Aorta (tissue), 5 donors: ENCODE measurements at regions of chr19 and their contacts with region 1.

Region 1: GRCh38 chr19:17703824-17704463 is 15.3 kb upstream of the MAP1S start:
- DNase-seq: peak; percentile 69 to 87
- ATAC-seq: peak; percentile 63
- H3K4me3 ChIP-seq: no peak overlapping the region
- H3K27ac ChIP-seq: no peak overlapping the region
- H3K4me1 ChIP-seq: no peaks in the 10 kb centered on the region
- H3K27me3 ChIP-seq: peaks cover 0 to under 1% of the 10 kb centered on the region in 2 donors

Region 2: GRCh38 chr19:17739121-17739875 is 35.4 kb after region 1 on chr19:
- intact Hi-C with region 1: no loop called
- DNase-seq: peak in 1 of 2 donors; percentile 76
- ATAC-seq: no peak
- H3K4me3 ChIP-seq: no peak overlapping the region
- H3K27ac ChIP-seq: no peak overlapping the region
- H3K4me1 ChIP-seq: no peaks in the 10 kb centered on the region
- H3K27me3 ChIP-seq: no peaks in the 10 kb centered on the region

Region 3: DNA sequence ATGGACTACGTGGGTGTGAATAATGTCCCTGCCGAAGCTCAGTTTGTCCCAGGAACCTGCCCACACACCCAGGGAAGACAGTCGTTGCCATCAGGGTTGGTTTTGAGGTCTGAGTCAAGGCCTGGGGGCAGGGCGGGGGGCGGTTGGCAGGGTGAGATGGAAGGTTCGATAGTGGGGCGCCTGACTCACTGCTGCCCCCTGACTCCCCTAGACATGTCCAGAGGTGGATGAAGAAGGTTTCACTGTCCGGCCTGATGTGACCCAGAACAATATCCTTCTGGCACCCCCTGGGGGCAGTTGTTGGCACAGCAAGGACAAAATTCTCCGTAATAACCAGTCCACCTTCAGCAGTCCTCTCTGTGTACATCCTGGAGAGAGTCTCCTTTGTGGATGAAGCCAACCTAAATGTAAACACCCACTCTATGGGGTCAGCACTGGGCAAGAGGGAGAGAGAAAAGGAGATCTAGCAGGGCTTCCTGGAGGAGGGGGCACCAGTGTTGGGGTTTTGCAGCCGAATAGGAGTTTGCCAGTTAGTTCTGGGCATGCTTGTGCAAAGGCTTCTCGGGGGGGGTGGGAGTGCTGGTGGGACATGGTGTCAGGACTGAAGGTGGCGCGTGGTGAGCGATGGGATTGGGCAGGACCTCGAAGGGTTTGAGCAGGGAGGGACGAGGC is 71.4 kb after region 1 on chr19:
- intact Hi-C with region 1: loop called in 1 of 2 experiments (anchors 5 kb)
- DNase-seq: no peak
- ATAC-seq: no peak
- H3K4me3 ChIP-seq: no peak overlapping the region
- H3K27ac ChIP-seq: no peak overlapping the region
- H3K4me1 ChIP-seq: no peaks in the 10 kb centered on the region
- H3K27me3 ChIP-seq: no peaks in the 10 kb centered on the region

Region 4: DNA sequence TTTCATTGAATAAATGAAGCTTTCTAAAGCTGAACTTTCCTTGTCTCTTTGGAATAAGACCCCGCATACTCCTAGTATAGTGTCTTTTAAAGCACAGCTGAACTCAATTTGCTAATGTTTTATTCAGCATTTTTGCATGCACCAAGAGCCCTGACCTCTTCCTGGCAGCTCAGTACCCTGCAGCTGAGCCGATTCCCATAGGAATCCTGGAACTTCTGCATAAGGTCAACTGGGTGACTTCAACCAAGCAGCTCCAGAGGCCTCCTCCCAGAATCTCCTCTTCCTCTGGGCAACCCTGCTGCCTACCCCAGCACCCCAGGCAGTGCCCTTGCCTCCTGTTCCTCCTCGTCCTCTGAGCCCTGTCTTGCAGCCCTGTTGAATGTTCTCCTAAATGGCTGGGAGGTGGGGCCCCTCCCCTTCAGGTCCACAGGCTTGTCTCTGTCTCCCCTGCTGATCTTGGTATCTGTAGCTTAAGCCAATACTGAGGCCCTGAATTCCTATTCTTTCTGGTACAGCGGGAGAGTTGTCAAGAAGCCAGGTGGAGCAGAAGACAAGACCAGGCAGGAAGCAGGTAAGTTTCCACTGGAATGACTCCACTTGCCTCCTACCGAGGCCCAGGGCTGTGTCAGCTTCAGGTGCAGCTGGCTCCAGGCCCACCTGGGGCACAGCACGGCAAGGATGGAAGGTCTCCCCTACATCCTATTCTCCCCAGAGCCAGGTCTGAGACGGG is 205.2 kb after region 1 on chr19:
- intact Hi-C with region 1: no loop called
- DNase-seq: no peak
- ATAC-seq: no peak
- H3K4me3 ChIP-seq: no peak overlapping the region
- H3K27ac ChIP-seq: no peak overlapping the region
- H3K4me1 ChIP-seq: no peaks in the 10 kb centered on the region
- H3K27me3 ChIP-seq: no peaks in the 10 kb centered on the region